Activated T-helper 1 cell treated with anti-CD3 and anti-CD28 coated beads, Interleukin-12 subunit alpha, Interleukin-12 subunit beta, Interleukin-2, Interleukin-4 antibody, amounts not matched to agents 30 ng/mL and 10 ng/mL and 1 ng/mL, durations not matched to agents 14 hours and 24 hours and 36 hours (primary cell): ENCODE measurements at regions of chr1 and their contacts with region 1.

Region 1: DNA sequence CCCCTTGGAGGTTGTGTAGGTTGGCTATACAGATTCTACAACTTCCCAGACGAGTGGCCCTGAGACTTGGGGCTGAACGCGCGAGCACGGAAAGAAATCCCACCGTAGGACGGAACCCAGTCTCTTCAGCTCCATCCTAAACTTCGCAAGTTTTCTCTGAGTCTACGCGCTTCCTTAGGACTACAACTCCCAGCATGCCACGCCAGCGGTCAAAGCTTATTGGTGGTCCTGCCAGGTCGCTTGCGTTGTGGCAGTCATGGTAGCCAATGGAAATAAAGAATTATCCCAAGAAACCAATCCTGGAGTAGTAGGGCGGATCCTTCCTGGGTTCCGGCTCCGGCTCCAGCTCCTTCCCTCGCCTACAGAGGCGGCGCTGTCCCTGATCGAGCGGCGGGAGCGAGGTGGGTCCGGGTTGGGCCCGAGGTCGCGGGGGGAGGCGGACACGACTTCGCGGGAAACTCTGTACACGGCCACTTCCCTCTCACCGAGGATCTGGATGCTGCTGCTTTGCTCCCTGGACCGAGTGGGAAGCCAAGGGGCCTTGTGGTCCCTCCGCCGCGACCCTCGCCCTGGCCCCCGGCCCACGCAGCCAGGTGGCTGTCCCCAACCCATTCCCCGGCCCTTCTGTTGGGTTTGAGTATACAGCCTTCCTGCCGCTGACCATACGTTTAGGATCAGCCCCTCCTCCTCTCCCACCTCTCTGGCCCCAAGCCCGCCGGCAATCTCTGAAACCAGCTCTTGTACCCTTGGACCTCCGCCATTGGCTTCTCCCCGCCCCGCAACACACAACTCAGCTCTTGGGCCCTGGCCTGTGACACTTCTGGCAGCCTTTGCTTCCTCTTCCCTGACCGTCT is at the start of gene ZNF691:
- DNase-seq: peak; percentile 86
- H3K4me3 Mint-ChIP-seq: peak within 1 kb of the TSS; percentile 97
- H3K27ac Mint-ChIP-seq: peak within 1 kb of the TSS; percentile 78
- H3K4me1 Mint-ChIP-seq: peaks cover 41% of the 10 kb centered on the region
- H3K27me3 Mint-ChIP-seq: no peaks in the 10 kb centered on the region
- total RNA-seq, gene ZNF691: 10.0 and 12.9 TPM in 2 replicates

Region 2: GRCh38 chr1:42816585-42817434 is 29.7 kb before region 1 on chr1 and contains the starts of genes ERMAP and SVBP:
- intact Hi-C with region 1: loop called (anchors 1 kb)
- DNase-seq: peak; percentile 90
- H3K4me3 Mint-ChIP-seq: peak within 1 kb of the TSS; percentile 79
- H3K27ac Mint-ChIP-seq: peak within 1 kb of the TSS; percentile 80
- H3K4me1 Mint-ChIP-seq: peaks cover 19% of the 10 kb centered on the region
- H3K27me3 Mint-ChIP-seq: no peaks in the 10 kb centered on the region
- total RNA-seq, gene ERMAP: 3.4 and 3.7 TPM in 2 replicates
- total RNA-seq, gene SVBP: 6.4 and 8.2 TPM in 2 replicates

Region 3: DNA sequence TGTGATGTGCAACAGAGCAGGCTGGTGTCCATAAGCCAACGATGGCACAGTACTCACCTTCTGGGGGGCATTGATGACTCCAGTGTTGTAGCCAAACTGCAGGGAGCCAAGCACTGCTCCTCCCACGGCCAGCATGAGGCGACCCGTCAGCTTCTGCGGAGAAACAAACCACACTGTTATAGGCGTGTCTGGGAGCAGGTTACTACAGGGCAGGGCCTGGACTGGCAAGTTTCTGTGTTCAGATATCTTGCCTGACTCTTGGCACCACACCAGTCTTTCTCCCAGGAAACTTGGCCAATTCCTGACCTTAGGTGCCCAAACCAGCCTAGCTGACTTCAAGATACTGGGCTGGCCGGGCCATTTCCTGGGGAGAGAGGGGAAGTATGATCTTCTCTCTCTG is 96.7 kb after region 1 on chr1:
- intact Hi-C with region 1: no loop called
- DNase-seq: no peak
- H3K4me3 Mint-ChIP-seq: peak overlapping the region; percentile 66
- H3K27ac Mint-ChIP-seq: peak overlapping the region; percentile 93
- H3K4me1 Mint-ChIP-seq: peaks cover 97% of the 10 kb centered on the region
- H3K27me3 Mint-ChIP-seq: no peaks in the 10 kb centered on the region

Region 4: GRCh38 chr1:44786138-44786840 is 1939.8 kb after region 1 on chr1:
- intact Hi-C with region 1: loop called (anchors 10 kb)
- DNase-seq: peak; percentile 66
- H3K4me3 Mint-ChIP-seq: peak overlapping the region; percentile 80
- H3K27ac Mint-ChIP-seq: peak overlapping the region; percentile 66
- H3K4me1 Mint-ChIP-seq: peaks cover 37% of the 10 kb centered on the region
- H3K27me3 Mint-ChIP-seq: no peaks in the 10 kb centered on the region